ENCODE measurements at regions of chr9 and their contacts with region 1.

Region 1: DNA sequence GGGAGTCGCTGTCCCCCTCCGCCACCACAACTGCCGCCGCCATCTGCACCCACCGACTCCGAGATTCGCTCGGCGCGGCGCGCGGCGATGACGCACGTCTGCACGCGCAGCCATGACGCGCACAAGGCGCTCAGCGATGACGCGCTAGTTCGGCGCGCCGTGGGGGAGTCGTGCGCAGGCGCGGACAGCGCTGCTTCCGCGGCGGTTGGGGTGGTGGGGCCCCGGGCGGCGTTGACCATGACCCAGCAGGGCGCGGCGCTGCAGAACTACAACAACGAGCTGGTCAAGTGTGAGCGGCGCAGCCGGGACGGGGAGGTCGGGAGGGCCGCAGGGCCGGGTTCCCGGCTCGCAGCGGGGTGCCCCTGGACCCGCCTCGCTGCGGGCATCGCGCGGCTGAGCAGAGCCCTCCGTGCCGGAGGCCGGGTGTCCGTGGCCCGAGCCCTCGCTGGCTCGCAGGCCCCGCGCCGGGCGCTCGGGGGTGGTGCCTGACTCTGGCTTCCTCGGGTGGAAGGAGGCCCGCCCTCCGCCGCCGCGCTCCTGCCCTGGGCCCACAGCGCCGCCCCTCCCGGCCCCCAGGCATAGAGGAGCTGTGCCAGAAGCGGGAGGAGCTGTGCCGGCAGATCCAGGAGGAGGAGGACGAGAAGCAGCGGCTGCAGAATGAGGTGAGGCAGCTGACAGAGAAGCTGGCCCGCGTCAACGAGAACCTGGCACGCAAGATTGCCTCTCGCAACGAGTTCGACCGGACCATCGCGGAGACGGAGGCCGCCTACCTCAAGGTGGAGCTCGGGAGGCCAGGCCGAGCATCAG is at the starts of genes ANAPC2 and SSNA1:
- DNase-seq: peak; percentile 90 to 99 (median 96)
- ATAC-seq: peak; percentile 82 to 87 (median 86)
- H3K4me3 ChIP-seq: peak within 1 kb of the TSS; percentile 86 to 97 (median 89)
- H3K27ac ChIP-seq: peak within 1 kb of the TSS; percentile 86 to 97 (median 92)
- H3K4me1 ChIP-seq: peaks cover 30 to 50% (median 35%) of the 10 kb centered on the region in 3 donors
- H3K27me3 ChIP-seq: no peaks in the 10 kb centered on the region
- CTCF ChIP-seq: peak in 1 of 4 donors; percentile 14
- total RNA-seq, gene ANAPC2: 22.2 to 39.4 (median 31.5) TPM
- total RNA-seq, gene SSNA1: 30.8 to 45.2 (median 38.3) TPM

Region 2: DNA sequence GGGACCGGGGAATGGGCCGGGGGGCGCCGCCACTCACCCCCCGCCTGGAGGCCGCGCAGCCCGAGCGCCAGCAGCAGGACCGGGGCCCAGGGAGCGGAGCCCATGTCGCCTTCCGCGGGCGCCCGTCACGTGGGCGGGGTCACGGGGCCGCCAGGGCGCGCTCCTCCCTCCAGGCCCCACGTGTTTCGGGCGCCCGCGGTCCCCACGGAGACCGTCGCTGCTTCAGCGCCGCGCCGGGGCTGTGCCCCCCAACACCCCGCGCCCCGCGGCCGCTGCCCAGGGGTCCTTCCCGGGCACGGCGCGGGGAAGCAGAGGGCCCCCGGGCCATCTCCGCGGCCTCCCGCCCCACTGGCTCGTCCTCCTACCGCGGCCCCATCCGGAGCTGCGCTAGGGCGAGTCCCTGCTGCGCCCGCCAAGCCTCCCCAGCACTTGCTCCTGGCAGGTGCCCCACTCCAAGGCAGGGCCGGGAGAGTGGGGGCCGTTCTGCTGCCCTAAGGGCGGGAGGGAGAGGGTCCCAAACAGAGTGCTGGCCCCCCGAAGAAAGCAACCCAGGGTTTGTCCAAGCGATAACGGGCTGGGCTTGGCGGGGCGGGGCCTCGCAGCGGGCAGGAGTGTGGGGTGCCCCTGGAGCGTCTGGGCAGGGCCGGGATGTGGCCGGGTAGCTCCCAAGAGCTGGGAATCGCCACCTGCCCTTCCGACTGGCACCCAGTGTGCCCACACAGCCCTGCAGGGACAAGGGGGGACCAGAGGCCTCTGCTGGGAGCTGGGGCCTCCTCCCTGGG is 73.9 kb before region 1 on chr9 and contains the start of gene DPP7:
- intact Hi-C with region 1: loop called in 1 of 3 experiments (anchors 5 kb)
- DNase-seq: peak; percentile 68 to 91 (median 80)
- ATAC-seq: peak; percentile 87 to 96 (median 91)
- H3K4me3 ChIP-seq: peak within 1 kb of the TSS; percentile 63 to 87 (median 79)
- H3K27ac ChIP-seq: no peak within 1 kb of the TSS
- H3K4me1 ChIP-seq: peaks cover 0 to 4% (median 0%) of the 10 kb centered on the region in 3 donors
- H3K27me3 ChIP-seq: no peaks in the 10 kb centered on the region
- CTCF ChIP-seq: no peak
- total RNA-seq, gene DPP7: 87.3 to 113 (median 98.8) TPM

Region 3: GRCh38 chr9:137531099-137531765 is 342.5 kb after region 1 on chr9:
- intact Hi-C with region 1: no loop called
- DNase-seq: peak in 2 of 6 donors; percentile 17 to 33
- ATAC-seq: no peak
- H3K4me3 ChIP-seq: no peak overlapping the region
- H3K27ac ChIP-seq: no peak overlapping the region
- H3K4me1 ChIP-seq: peaks cover 5 to 10% (median 7%) of the 10 kb centered on the region in 3 donors
- H3K27me3 ChIP-seq: no peaks in the 10 kb centered on the region
- CTCF ChIP-seq: no peak